ENCODE measurements at regions of chr10 and their contacts with region 1.

Region 1: GRCh38 chr10:104268716-104269645 is at the start of gene GSTO2:
- DNase-seq: peak; percentile 98
- H3K4me3 Mint-ChIP-seq: peak within 1 kb of the TSS; percentile 92
- H3K27ac Mint-ChIP-seq: peak within 1 kb of the TSS; percentile 96
- H3K4me1 Mint-ChIP-seq: peaks cover 45% of the 10 kb centered on the region
- H3K27me3 Mint-ChIP-seq: peaks cover 4% of the 10 kb centered on the region
- total RNA-seq, gene GSTO2: 1.1 and 1.2 TPM in 2 replicates

Region 2: GRCh38 chr10:103911021-103911459 is 357.9 kb before region 1 on chr10:
- intact Hi-C with region 1: loop called (anchors 2 kb)
- DNase-seq: peak; percentile 54
- H3K4me3 Mint-ChIP-seq: peak overlapping the region; percentile 68
- H3K27ac Mint-ChIP-seq: peak overlapping the region; percentile 90
- H3K4me1 Mint-ChIP-seq: peaks cover 72% of the 10 kb centered on the region
- H3K27me3 Mint-ChIP-seq: no peaks in the 10 kb centered on the region

Region 3: GRCh38 chr10:104231784-104232612 is 37.0 kb before region 1 on chr10 and contains the start of gene CFAP43:
- intact Hi-C with region 1: loop called (anchors 1 kb)
- DNase-seq: peak; percentile 99
- H3K4me3 Mint-ChIP-seq: peak within 1 kb of the TSS; percentile 82
- H3K27ac Mint-ChIP-seq: peak within 1 kb of the TSS; percentile 63
- H3K4me1 Mint-ChIP-seq: peaks cover 12% of the 10 kb centered on the region
- H3K27me3 Mint-ChIP-seq: peaks cover 33% of the 10 kb centered on the region
- total RNA-seq, gene CFAP43: not detected in 2 replicates

Region 4: GRCh38 chr10:104242545-104242944 is 26.4 kb before region 1 on chr10:
- intact Hi-C with region 1: no loop called
- DNase-seq: no peak
- H3K4me3 Mint-ChIP-seq: no peak overlapping the region
- H3K27ac Mint-ChIP-seq: no peak overlapping the region
- H3K4me1 Mint-ChIP-seq: peaks cover 8% of the 10 kb centered on the region
- H3K27me3 Mint-ChIP-seq: peaks cover 32% of the 10 kb centered on the region

Region 5: GRCh38 chr10:104254493-104255310 is 14.3 kb before region 1 on chr10 and contains the start of gene GSTO1:
- intact Hi-C with region 1: loop called (anchors 1 kb)
- DNase-seq: peak; percentile 39
- H3K4me3 Mint-ChIP-seq: peak within 1 kb of the TSS; percentile 96
- H3K27ac Mint-ChIP-seq: peak within 1 kb of the TSS; percentile 96
- H3K4me1 Mint-ChIP-seq: peaks cover 52% of the 10 kb centered on the region
- H3K27me3 Mint-ChIP-seq: peaks cover 6% of the 10 kb centered on the region
- total RNA-seq, gene GSTO1: 125 TPM in 2 replicates

Region 6: DNA sequence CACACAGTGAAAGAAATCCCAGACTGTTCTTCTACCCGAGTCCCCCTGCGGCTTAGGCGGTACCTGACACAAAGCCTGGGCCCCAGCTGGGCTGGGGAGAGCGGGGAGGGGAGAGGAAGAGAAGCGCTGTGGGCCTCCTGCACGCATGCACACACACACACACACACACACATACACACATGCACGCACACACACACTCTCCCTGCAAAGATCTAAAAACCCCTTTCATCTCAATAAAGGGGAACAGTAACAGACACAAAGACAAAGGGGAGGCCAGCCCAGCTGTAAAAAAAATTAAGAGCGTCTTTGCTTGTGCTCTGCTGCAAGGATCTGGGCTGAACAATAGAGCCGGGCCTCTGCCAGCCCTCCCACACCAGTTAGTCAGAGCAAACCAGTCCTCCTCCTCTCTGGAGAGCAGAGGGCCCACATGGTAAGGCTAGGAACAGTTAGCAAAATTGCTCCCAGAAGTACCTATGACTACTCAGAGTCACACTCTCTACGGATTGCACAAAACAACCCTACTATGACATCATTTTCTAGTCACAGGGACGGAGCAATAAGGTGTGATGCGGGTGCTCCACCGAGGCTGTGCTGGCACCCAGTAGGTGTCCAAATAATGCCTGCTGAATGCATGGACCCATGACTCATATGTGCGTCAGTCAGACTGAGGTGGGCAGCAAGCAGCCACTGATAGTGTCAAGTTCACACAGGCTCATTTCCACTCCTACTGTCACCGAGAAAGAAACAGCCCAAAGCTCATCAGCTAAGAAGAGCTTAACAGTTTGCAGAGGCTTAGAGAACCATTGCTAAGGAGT is 60.1 kb after region 1 on chr10:
- intact Hi-C with region 1: loop called (anchors 1 kb)
- DNase-seq: peak; percentile 56
- H3K4me3 Mint-ChIP-seq: peak overlapping the region; percentile 68
- H3K27ac Mint-ChIP-seq: peak overlapping the region; percentile 93
- H3K4me1 Mint-ChIP-seq: peaks cover 100% of the 10 kb centered on the region
- H3K27me3 Mint-ChIP-seq: no peaks in the 10 kb centered on the region

Region 7: DNA sequence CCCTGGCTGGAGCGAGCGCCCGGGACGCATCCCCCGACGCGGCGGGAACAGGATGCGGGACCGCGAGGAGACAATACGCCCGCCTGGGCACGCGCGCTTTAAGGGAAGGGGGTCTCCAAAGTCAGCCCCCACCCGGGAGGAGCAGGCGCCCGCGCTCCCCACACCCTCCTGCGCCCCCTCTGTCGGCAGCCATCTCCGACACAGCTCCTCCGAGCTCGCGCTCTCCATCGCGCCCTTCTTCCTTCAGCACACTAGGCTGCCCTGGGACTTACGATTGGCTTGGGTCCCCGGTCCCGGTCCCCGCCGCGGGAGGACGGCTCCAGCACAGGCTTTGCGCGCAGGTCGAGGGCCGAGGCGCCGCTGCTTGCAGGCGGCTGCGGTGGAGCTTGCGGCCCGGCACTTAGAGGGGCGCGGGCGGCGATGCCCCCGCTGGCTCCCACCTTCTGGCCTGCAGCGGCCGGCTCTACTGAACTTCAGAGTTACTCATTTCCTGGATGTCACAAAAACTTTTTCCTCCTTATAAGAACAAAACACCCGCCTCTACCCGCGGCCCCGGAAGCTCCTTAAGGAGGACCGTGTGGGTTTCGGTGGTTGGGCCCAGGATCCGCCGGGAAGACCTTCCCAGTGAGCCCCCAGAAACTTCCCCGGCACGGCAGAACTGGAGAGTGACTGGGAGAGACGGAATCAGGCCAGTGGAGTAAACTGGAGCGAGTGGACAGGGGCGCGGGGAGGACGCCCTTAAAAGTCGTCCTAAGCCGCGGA is 69.2 kb after region 1 on chr10 and contains the start of gene ITPRIP:
- intact Hi-C with region 1: loop called (anchors 1 kb)
- DNase-seq: peak; percentile 68
- H3K4me3 Mint-ChIP-seq: peak within 1 kb of the TSS; percentile 100
- H3K27ac Mint-ChIP-seq: peak within 1 kb of the TSS; percentile 100
- H3K4me1 Mint-ChIP-seq: peaks cover 57% of the 10 kb centered on the region
- H3K27me3 Mint-ChIP-seq: peaks cover 5% of the 10 kb centered on the region
- total RNA-seq, gene ITPRIP: 17.3 and 18.1 TPM in 2 replicates

Measured in activated T-helper 1 cell treated with anti-CD3 and anti-CD28 coated beads, Interleukin-12 subunit alpha, Interleukin-12 subunit beta, Interleukin-2, Interleukin-4 antibody, amounts not matched to agents 30 ng/mL and 10 ng/mL and 1 ng/mL, durations not matched to agents 14 hours and 24 hours and 36 hours (primary cell).